H1 (cell line): ENCODE measurements at regions of chr5 and their contacts with region 1.

Region 1: GRCh38 chr5:149345147-149345875 is at the start of gene GRPEL2:
- DNase-seq: peak; percentile 86 to 90
- H3K4me3 ChIP-seq: peak within 1 kb of the TSS; percentile 72 to 99 (median 93)
- H3K27ac ChIP-seq: peak within 1 kb of the TSS; percentile 86
- H3K4me1 ChIP-seq: peaks cover 0 to 5% (median 1%) of the 10 kb centered on the region in 4 experiments; a peak in 4 of 7 replicates
- H3K27me3 ChIP-seq: no peaks in the 10 kb centered on the region
- CTCF ChIP-seq: no peak
- EP300 ChIP-seq: peak in 1 of 2 experiments; percentile 5; a peak in 1 of 3 replicates
- POLR2A ChIP-seq: peak; percentile 86 to 88
- RAD21 ChIP-seq: no peak
- total RNA-seq, gene GRPEL2: 48.9 and 52.2 TPM in 2 replicates

Region 2: DNA sequence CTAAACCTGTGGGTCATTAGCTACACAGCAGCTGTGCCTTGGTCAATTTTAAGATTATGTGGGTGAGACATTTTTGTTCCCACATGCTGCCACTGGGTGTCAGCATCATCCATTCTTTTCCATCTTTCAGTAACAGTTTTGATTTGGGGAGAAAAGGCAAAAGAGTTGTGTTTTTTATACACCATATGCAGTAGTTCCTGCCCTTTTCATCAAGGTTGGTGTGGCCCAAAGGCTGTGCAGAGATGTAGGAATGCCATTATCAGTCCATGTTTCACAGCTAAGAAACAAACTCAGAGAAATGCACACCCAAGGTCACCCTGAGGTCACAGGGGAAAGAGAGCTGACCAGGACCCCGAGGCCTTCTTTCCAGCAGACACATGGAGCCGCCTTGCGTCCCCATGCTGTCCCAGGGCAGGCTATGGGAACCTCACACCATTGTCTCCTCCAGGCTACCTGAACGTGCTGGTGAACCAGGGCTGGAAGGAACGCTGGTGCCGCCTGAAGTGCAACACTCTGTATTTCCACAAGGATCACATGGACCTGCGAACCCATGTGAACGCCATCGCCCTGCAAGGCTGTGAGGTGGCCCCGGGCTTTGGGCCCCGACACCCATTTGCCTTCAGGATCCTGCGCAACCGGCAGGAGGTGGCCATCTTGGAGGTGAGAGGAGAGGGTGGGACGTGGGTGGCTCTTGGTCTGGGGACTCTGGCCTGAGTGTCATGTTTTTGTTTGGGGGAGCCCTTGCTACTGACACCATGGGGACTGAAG is 27.8 kb before region 1 on chr5:
- CTCF ChIA-PET with region 1: interaction called, 9 read pairs
- POLR2A ChIA-PET with region 1: interaction called, 10 read pairs
- DNase-seq: no peak
- H3K4me3 ChIP-seq: no peak overlapping the region
- H3K27ac ChIP-seq: no peak overlapping the region; the same call in 1 of the 2 replicates
- H3K4me1 ChIP-seq: peaks cover 0 to 4% (median 1%) of the 10 kb centered on the region in 4 experiments; a peak in 4 of 7 replicates
- H3K27me3 ChIP-seq: no peaks in the 10 kb centered on the region
- CTCF ChIP-seq: peak in 2 of 3 experiments; percentile 63 to 67; a peak in 3 of 4 replicates
- EP300 ChIP-seq: no peak
- POLR2A ChIP-seq: no peak
- RAD21 ChIP-seq: peak; percentile 68 to 75

Region 3: DNA sequence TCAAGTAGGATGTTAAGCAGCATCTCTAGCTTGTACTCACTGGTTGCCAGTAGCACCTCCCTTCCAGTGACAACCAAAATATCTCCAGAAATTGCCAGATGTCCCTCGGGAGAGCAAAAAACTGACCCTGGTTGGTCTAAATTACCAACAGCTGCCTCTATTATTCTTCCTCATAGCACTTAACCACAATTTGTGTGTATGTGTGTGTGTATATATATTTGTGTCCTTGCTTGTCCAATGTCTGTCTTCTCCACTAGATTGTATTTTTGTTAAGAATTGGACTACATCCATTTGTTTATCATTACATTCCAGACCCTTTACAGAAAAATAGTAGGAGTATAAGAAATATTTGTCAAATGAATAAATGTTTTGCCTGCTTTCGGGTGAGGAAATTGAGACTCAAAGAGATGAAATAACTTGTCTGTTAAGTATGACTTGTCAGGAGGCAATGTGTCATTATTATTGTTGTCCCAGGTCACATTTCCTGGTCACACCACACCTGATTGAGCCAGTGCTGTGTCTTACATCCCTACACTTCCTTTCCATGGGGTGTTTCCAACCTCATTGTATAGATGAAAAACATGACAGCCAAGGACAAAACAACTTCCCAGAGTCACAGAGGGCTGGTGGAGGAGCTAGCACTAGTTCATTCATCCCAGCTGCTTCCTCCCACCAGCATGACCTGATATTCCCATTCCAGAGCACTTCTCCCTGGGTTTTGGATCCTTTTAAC is 11.4 kb before region 1 on chr5:
- CTCF ChIA-PET with region 1: interaction called, 4 read pairs
- POLR2A ChIA-PET with region 1: interaction called, 12 read pairs
- DNase-seq: no peak
- H3K4me3 ChIP-seq: no peak overlapping the region
- H3K27ac ChIP-seq: no peak overlapping the region
- H3K4me1 ChIP-seq: no peaks in the 10 kb centered on the region
- H3K27me3 ChIP-seq: no peaks in the 10 kb centered on the region
- CTCF ChIP-seq: no peak
- EP300 ChIP-seq: no peak
- POLR2A ChIP-seq: no peak
- RAD21 ChIP-seq: no peak

Region 4: GRCh38 chr5:149357370-149358293 is 12.3 kb after region 1 on chr5 and contains the start of gene PCYOX1L:
- CTCF ChIA-PET with region 1: interaction called, 6 read pairs
- POLR2A ChIA-PET with region 1: interaction called, 72 read pairs
- DNase-seq: peak; percentile 87 to 99
- H3K4me3 ChIP-seq: peak within 1 kb of the TSS; percentile 68 to 87 (median 76)
- H3K27ac ChIP-seq: no peak within 1 kb of the TSS
- H3K4me1 ChIP-seq: peaks cover 0 to 6% (median 2%) of the 10 kb centered on the region in 4 experiments; a peak in 5 of 7 replicates
- H3K27me3 ChIP-seq: no peaks in the 10 kb centered on the region; a peak in 1 of 7 replicates
- CTCF ChIP-seq: 0 out of 4 replicates have a peak, but pooled peaks of 1 of the 3 experiments have one; percentile 0
- EP300 ChIP-seq: peak in 1 of 2 experiments; percentile 18; a peak in 1 of 3 replicates
- POLR2A ChIP-seq: peak in 1 of 2 experiments; percentile 77; a peak in 2 of 3 replicates
- RAD21 ChIP-seq: no peak
- total RNA-seq, gene PCYOX1L: 6.8 and 7.9 TPM in 2 replicates